SK-N-SH (cell line): ENCODE measurements at regions of chr3 and their contacts with region 1.

Region 1: GRCh38 chr3:56251343-56251945 is 216.8 kb downstream of the ERC2 start:
- DNase-seq: peak; percentile 57
- H3K4me3 ChIP-seq: no peak overlapping the region
- H3K27ac ChIP-seq: no peak overlapping the region
- H3K4me1 ChIP-seq: no peaks in the 10 kb centered on the region
- H3K27me3 ChIP-seq: no peaks in the 10 kb centered on the region
- CTCF ChIP-seq: peak; percentile 93
- EP300 ChIP-seq: no peak
- RAD21 ChIP-seq: peak; percentile 92

Region 2: GRCh38 chr3:55485211-55485791 is 766.1 kb before region 1 on chr3:
- CTCF ChIA-PET with region 1: interaction called, 10 read pairs
- POLR2A ChIA-PET with region 1: no interaction called
- DNase-seq: peak; percentile 92
- H3K4me3 ChIP-seq: peak overlapping the region; percentile 78 to 83
- H3K27ac ChIP-seq: peak overlapping the region; percentile 24 to 88; a peak in 3 of 4 replicates
- H3K4me1 ChIP-seq: peaks cover 0 to 29% of the 10 kb centered on the region in 2 experiments; a peak in 2 of 4 replicates
- H3K27me3 ChIP-seq: no peaks in the 10 kb centered on the region
- CTCF ChIP-seq: peak; percentile 47
- EP300 ChIP-seq: no peak
- RAD21 ChIP-seq: peak; percentile 71

Region 3: DNA sequence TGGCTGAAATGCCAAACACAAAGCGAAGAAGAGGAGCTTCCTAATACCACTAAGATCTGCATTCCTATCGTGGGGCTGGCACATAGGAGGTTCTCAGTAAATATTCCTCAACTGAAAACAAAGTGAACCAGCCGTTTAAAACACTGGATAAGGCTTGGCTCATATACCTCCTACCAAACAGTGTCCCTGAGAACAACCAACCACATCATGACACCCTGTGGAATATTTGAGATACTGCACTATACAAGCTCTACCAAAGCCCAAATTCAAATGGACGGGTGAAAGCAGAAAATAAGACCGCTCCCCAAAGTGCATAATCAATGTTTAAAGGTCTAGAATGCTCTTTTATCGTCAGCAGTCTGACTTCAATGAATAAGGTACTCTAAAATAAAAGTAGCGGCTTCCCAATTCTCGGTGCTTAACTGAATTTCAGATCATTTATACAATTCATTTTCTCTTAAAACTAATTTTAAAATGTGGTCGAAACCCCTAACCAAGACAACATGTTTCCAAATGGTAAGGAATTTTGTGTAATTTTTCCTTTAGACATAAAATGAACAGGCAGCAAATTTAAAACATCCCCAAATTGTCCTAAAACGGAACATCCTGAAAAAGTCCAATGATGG is 209.0 kb before region 1 on chr3:
- CTCF ChIA-PET with region 1: interaction called, 25 read pairs
- POLR2A ChIA-PET with region 1: no interaction called
- DNase-seq: peak; percentile 57
- H3K4me3 ChIP-seq: no peak overlapping the region; a peak in 1 of 4 replicates
- H3K27ac ChIP-seq: no peak overlapping the region
- H3K4me1 ChIP-seq: no peaks in the 10 kb centered on the region
- H3K27me3 ChIP-seq: no peaks in the 10 kb centered on the region
- CTCF ChIP-seq: peak; percentile 65
- EP300 ChIP-seq: no peak
- RAD21 ChIP-seq: peak; percentile 89

Region 4: GRCh38 chr3:56238299-56238698 is 13.1 kb before region 1 on chr3:
- CTCF ChIA-PET with region 1: interaction called, 31 read pairs
- POLR2A ChIA-PET with region 1: no interaction called
- DNase-seq: no peak
- H3K4me3 ChIP-seq: no peak overlapping the region
- H3K27ac ChIP-seq: no peak overlapping the region
- H3K4me1 ChIP-seq: no peaks in the 10 kb centered on the region
- H3K27me3 ChIP-seq: no peaks in the 10 kb centered on the region
- CTCF ChIP-seq: no peak
- EP300 ChIP-seq: no peak
- RAD21 ChIP-seq: no peak

Region 5: DNA sequence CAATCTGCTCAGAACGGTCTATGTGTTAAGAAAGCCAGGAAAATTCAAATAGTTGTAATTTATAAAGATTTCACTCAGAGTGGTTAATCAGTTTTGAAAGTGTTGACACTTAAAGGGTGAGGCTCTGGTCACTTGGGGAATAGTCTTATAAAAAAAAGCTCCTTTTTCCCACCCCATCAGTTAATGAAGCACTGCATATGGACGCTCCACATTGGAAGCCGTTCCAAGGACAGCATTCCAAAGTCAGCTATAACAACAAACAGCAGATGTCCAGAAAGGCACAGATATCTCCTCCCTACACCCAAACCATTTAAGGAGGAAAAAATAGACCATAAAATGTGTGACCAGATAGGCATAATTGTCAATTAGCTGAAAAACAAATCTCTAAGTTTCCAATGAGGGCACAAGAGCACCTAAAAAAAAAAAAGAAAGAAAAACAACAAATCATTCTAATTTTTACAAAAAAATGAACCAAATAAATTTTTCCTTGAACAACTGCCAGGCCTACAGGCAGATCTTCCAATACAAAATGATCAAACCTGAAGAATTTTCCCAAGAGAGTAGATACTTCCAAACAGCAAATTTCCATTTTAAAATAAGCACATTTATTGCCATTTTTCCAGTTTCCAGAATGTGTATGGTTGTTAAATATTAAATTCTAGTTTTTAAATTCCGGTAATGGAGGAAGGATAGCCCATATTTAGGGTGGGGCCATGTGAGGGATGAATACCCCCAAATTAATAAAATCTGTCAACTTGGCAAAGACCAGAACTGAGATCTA is 18.5 kb after region 1 on chr3:
- CTCF ChIA-PET with region 1: interaction called, 15 read pairs
- POLR2A ChIA-PET with region 1: no interaction called
- DNase-seq: no peak
- H3K4me3 ChIP-seq: no peak overlapping the region
- H3K27ac ChIP-seq: no peak overlapping the region
- H3K4me1 ChIP-seq: no peaks in the 10 kb centered on the region
- H3K27me3 ChIP-seq: no peaks in the 10 kb centered on the region
- CTCF ChIP-seq: no peak
- EP300 ChIP-seq: no peak
- RAD21 ChIP-seq: no peak